ENCODE measurements at regions of chr5 and their contacts with region 1.

Region 1: GRCh38 chr5:127650649-127651048 is 1.8 kb downstream of the CTXN3 start:
- DNase-seq: no peak
- ATAC-seq: peak in 2 of 4 donors; percentile 51 to 63
- H3K4me3 ChIP-seq: peak overlapping the region; percentile 34
- H3K27ac ChIP-seq: peak overlapping the region; percentile 37
- H3K4me1 ChIP-seq: peaks cover 23% of the 10 kb centered on the region
- H3K27me3 ChIP-seq: no peaks in the 10 kb centered on the region
- CTCF ChIP-seq: no peak

Region 2: DNA sequence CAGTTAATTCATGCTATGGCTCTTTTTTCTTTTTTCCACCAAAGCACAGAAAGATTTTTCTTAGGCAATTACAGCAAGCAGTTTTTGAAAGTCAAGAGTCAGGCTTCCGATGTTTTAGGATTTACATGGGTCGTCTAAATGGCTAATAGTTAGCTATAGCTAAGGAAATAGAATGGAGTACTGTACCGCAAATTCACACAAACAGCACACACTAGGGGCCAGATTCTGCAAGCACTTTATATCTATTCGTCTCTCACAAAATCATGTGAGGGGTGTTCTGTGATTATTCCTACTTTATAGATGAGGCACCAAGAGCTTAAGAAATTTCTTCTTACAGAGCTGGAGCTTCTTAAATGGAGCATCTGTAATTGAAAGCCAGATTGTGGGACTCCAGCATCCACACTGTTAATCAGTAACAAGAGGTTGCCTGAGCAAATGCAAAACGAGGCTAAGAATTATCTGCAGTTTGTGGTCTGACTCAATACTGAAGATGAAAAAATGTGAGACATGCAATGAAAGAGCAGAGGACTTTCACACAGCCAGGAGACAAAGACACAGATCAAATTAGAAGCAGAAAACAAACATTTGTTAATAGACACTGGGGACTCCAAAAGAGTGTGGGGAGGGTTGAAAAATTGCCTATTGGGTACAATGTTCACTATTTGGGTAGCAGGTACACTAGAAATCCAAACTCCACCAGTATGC is 64.4 kb before region 1 on chr5:
- intact Hi-C with region 1: loop called in 1 of 2 experiments (anchors 5 kb)
- DNase-seq: no peak
- ATAC-seq: no peak
- H3K4me3 ChIP-seq: no peak overlapping the region
- H3K27ac ChIP-seq: no peak overlapping the region
- H3K4me1 ChIP-seq: peaks cover 13% of the 10 kb centered on the region
- H3K27me3 ChIP-seq: no peaks in the 10 kb centered on the region
- CTCF ChIP-seq: no peak

Region 3: DNA sequence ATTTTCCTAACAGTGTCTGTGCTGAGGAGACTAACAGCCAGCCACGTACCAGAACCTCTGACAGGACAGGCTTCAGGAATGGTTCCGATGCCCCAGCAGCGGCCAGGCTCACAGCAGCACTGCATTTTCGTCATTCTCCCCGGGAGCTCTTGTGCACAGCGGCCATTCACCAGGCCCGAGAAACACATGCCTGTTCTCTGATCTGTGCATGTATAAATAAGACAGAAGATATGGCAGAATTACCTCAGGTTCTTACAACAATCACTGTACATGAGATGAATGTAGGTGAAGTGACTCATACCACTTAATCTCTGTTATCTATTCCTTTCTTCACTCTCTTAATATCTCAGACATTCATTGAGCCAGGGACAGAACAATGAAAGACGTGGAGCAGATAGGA is 744.4 kb after region 1 on chr5:
- intact Hi-C with region 1: no loop called
- DNase-seq: no peak
- ATAC-seq: no peak
- H3K4me3 ChIP-seq: no peak overlapping the region
- H3K27ac ChIP-seq: no peak overlapping the region
- H3K4me1 ChIP-seq: no peaks in the 10 kb centered on the region
- H3K27me3 ChIP-seq: no peaks in the 10 kb centered on the region
- CTCF ChIP-seq: no peak

Measured in psoas muscle (tissue), 8 donors.